ENCODE measurements at regions of chr16 and their contacts with region 1.

Region 1: GRCh38 chr16:3264137-3265036 is 8.0 kb upstream of the MEFV start:
- DNase-seq: peak; percentile 98

Region 2: GRCh38 chr16:3305109-3306068 is 41.0 kb after region 1 on chr16 and contains the starts of genes TIGD7 and ZNF75A:
- intact Hi-C with region 1: loop called (anchors 1 kb)
- DNase-seq: peak; percentile 97
- total RNA-seq, gene TIGD7: 8.2 TPM
- total RNA-seq, gene ZNF75A: 21.3 TPM

Region 3: DNA sequence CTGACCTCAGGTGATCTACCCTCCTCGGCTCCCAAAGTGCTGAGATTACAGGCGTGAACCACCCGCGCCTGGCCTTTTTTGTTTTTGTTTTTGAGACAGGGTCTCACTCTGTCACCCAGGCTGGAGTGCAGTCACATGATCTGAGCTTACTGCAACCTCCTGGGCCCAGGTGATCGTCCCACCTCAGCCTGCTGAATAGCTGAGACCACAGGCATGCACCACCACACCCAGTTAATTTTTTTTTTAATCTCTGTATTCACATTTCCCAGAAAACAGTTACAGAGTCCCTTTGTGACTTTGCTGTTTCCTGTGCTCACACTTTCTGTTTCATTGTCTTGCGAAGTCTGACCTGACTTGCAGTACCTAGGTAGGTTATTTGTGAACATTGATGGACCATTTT is 239.1 kb after region 1 on chr16:
- intact Hi-C with region 1: loop called (anchors 5 kb)
- DNase-seq: peak; percentile 41

Measured in cardiac septum (tissue), 1 donor.